Right ventricle myocardium superior (tissue), 1 donor: ENCODE measurements at regions of chr7 and their contacts with region 1.

Region 1: DNA sequence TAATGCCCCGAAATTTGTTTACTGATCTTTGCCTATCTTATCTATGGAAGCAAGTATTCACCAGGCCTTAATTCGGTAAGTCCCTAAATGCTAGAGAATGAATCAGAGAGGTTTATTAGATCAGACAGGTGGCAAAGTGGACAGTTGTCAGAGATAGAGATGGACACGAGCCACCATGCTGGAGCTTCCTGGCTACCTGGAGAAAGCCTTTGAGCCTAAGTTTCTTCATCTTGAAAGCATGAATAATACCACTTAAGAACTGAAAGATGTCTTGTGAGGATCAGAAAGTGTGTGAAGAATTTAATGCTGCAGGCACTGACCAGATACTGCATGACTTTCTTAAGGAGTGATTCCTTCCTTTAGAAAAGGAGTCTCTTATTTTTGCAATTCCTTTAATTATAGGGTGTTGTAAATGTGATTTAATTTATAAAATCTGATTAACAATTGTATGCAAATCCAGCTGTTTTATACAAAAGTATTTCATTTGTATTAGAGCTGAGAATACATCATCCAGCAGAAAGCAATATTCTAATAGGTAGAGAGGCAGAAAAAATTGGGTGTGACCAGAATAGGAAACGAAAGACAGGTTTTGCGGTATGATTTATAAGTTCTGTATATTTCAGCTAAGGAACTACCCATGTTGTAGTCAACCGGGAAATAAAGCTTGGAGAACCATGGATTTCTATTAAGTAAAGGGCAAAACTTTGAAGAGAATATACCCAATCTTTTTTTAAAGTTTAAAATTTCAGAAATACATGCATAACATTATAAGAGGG is 82.7 kb downstream of the SMURF1 start:
- DNase-seq: no peak
- ATAC-seq: no peak

Region 2: DNA sequence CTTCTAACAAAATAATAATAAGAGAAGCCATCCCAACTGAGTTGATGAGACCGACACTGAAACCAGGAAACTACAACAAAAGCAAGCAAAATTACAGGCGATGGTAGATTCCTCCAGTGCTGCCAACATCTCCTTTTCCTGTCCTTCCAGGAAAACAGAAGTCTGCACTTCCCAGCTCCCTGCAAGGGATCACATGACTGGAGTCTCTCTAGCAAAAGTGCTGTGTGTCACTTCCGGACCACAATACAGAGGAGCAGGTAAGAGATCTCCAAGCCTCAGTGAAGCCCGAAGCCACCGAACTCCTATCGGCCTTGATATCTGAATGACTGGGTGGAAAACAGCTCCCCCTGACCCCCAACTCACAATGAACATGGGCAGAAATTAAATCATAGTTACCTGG is 19.5 kb after region 1 on chr7:
- intact Hi-C with region 1: loop called (anchors 1 kb)
- DNase-seq: no peak
- ATAC-seq: no peak